ENCODE measurements at regions of chrX and their contacts with region 1.

Region 1: GRCh38 chrX:21493226-21493830 is 119.1 kb downstream of the CNKSR2 start:
- H3K4me3 ChIP-seq: no peak overlapping the region
- H3K27ac ChIP-seq: no peak overlapping the region
- H3K4me1 ChIP-seq: no peaks in the 10 kb centered on the region; the same call in 1 of the 2 replicates
- CTCF ChIP-seq: no peak

Region 2: DNA sequence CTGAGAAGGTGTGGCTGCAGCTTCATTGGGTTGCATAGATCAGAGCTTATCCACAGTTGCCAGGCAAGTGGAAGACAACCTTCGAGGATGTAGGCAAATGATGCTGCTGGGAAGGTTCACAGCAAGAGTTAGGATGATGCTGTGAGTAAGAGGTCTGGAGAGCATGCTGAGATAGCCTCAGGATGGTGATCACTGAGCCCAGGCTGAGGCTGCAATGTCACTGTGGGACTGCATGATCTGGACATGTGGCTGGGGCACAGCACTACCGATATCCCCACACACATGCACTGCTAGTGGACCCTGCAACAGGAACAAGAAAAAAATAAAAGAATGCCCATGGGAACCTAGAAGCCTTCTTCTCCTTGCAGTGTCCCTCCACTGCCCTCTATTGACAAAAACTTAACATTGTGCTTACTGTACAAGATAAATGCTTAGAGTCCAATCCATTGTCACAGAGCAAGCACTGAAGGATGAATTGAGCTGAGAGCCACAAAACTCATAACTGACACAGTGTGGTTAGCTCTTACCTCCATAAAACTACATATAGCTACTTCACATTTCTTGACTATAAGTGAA is 13.5 kb before region 1 on chrX:
- CTCF ChIA-PET with region 1: interaction called, 11 read pairs
- POLR2A ChIA-PET with region 1: no interaction called
- H3K4me3 ChIP-seq: no peak overlapping the region
- H3K27ac ChIP-seq: no peak overlapping the region
- H3K4me1 ChIP-seq: no peaks in the 10 kb centered on the region
- CTCF ChIP-seq: no peak

Measured in HEK293 (cell line).